GM10248 (cell line): ENCODE measurements at regions of chr18 and their contacts with region 1.

Region 1: GRCh38 chr18:24009651-24010333 is 4.8 kb upstream of the TTC39C start:
- DNase-seq: no peak
- CTCF ChIP-seq: peak; percentile 23

Region 2: GRCh38 chr18:23998811-23999210 is 11.0 kb before region 1 on chr18:
- CTCF ChIA-PET with region 1: interaction called, 11 read pairs
- POLR2A ChIA-PET with region 1: no interaction called
- DNase-seq: no peak
- CTCF ChIP-seq: no peak

Region 3: DNA sequence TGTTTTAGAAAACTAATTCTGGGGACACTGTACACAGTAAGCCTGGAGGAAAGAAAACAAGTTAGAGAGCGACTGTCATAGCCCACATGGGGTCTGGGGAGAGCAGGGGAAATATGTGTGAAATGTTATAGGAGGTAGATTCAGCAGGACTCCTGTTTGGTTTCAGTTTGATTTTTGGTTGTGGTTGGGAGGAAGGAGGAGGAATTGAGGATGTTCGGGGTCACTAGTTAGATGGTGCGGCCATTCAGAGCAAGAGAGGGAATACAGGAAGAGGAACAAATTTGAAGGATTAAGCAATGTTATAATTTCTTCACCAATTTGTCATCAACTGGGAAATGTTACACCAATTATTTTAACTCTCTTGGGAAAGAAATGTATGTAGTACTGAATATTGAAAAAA is 29.9 kb after region 1 on chr18:
- CTCF ChIA-PET with region 1: no interaction called
- POLR2A ChIA-PET with region 1: no interaction called
- DNase-seq: no peak
- CTCF ChIP-seq: no peak